ENCODE measurements at regions of chr13 and their contacts with region 1.

Region 1: DNA sequence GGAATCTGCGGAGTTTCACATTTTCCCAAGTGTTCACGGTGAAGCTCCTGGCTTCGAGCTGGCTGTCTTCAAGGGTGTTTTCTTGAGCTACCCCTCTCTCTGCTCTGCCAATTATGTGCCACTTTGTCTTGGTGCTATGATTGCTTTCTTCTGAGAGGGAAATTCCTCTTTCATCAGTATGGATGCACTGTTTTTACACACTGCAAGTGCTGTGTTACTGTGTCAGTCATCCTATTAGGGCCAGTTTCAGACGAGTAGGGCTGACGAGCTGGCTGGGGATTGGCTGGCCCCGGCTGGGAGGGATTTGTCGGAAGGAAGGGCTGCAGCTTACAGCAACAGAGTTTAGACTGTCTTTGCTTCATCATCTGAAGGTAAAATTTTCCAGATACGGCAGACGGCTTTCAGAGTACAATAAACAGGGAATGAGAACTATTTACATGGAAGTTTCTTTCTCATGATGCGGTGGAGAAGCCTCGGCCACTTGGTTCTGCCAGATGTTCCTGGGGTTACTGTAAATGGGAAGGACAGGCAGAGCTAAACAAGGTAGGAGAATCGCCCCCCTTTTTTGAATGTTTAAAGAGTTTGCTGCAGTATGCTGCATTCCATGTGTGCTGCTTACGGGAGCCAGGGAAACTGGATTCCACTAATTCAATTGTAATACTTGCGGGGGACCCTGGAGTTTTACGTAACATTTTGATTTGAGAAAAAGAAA is at the start of gene MBNL2:
- DNase-seq: peak; percentile 88 to 93
- ATAC-seq: peak; percentile 94 to 97 (median 96)
- H3K4me3 ChIP-seq: peak within 1 kb of the TSS; percentile 51 to 84 (median 62)
- H3K27ac ChIP-seq: peak within 1 kb of the TSS; percentile 78 to 93 (median 90)
- H3K4me1 ChIP-seq: peaks cover 6 to 37% (median 31%) of the 10 kb centered on the region in 9 donors
- H3K27me3 ChIP-seq: no peaks in the 10 kb centered on the region
- CTCF ChIP-seq: no peak
- total RNA-seq, gene MBNL2: 59.7 to 95.0 (median 85.2) TPM

Region 2: GRCh38 chr13:97242755-97243497 is 20.8 kb after region 1 on chr13:
- intact Hi-C with region 1: loop called in 1 of 10 experiments (anchors 2 kb)
- DNase-seq: peak in 1 of 2 donors; percentile 50
- ATAC-seq: peak; percentile 24 to 64 (median 34)
- H3K4me3 ChIP-seq: peak overlapping the region in 1 of 10 donors; percentile 12
- H3K27ac ChIP-seq: peak overlapping the region; percentile 21 to 88 (median 70)
- H3K4me1 ChIP-seq: peaks cover 26 to 100% (median 97%) of the 10 kb centered on the region in 9 donors
- H3K27me3 ChIP-seq: no peaks in the 10 kb centered on the region
- CTCF ChIP-seq: no peak

Region 3: DNA sequence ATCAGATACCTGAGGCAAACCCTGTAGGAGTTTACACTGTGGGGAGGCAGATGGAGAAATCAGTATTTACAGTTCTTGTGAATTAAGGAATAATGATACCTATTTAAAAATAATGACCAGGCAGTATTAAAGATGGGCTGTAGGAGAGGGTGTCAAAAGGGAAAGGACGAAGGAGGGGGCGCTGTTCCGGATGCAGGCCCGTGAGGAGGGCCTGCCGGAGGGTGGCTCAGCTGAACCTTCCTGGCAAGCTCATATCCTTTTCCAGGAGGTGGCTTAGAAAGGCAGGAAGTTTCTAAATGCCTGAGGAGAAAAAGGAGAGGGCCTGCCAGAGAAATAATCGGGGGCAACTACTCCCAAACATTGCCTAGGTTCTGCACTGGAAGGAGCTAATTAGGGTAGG is 46.6 kb after region 1 on chr13:
- intact Hi-C with region 1: loop called in 3 of 10 experiments (anchors 5 kb)
- DNase-seq: no peak
- ATAC-seq: peak in 7 of 8 donors; percentile 43 to 70 (median 58)
- H3K4me3 ChIP-seq: no peak overlapping the region
- H3K27ac ChIP-seq: peak overlapping the region in 7 of 10 donors; percentile 1 to 69 (median 53)
- H3K4me1 ChIP-seq: peaks cover 21 to 93% (median 73%) of the 10 kb centered on the region in 9 donors
- H3K27me3 ChIP-seq: no peaks in the 10 kb centered on the region
- CTCF ChIP-seq: peak in 5 of 9 donors; percentile 16 to 32 (median 28)

Region 4: DNA sequence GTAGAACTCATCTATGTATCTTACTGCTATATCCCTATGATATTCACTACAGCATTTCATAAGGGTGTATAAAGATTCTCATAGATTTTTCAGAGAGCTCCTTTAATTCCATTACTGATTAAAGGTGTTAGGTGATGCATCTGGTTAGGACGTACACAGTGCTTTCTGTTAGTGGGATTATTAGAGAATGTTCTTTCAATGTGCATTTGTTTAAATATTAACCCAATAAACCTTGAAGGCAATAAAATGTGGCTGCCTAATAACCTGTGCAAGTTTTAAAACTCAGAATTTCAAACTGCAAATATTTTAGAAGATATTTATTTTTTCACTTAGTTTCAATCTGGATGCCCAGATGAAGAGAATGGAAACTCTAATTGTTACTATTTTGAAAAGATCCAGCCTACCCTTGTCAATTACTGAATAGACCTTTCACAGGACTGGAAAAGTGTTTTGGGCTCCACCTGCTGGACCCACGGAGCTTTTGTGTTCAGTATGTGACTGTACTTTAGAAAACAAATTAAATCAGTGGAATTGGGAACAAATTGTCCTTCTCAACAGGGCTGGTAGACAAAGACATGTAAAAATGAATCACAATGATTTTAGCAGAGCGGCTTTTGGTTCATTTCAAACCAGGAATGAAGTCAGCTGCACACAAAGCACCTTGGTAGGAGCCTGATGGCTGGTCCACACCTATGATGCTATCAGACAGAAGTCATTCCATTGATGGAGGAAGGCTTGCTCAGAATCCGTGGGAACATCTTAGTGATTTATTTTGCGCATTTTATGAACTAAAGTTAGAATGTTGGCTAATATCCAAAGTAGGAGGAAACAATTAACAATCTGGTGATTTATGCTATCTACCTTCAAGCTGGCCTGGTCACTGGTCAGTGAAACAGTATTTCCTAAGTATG is 122.4 kb after region 1 on chr13:
- intact Hi-C with region 1: loop called in 8 of 10 experiments (anchors 1 to 10 kb)
- DNase-seq: peak; percentile 49 to 70
- ATAC-seq: peak; percentile 74 to 89 (median 83)
- H3K4me3 ChIP-seq: no peak overlapping the region
- H3K27ac ChIP-seq: peak overlapping the region in 5 of 10 donors; percentile 1 to 33 (median 13)
- H3K4me1 ChIP-seq: peaks cover 0 to 51% (median 29%) of the 10 kb centered on the region in 9 donors
- H3K27me3 ChIP-seq: no peaks in the 10 kb centered on the region
- CTCF ChIP-seq: peak; percentile 50 to 87 (median 70)

Measured in heart right ventricle (tissue), 16 donors.